ENCODE measurements at regions of chr17 and their contacts with region 1.

Region 1: GRCh38 chr17:31216053-31216751 is 80.8 kb downstream of the OMG start:
- DNase-seq: peak; percentile 55

Region 2: GRCh38 chr17:31008374-31009041 is 207.7 kb before region 1 on chr17:
- in situ Hi-C with region 1: loop called (anchors 25 kb)
- DNase-seq: peak; percentile 83

Region 3: GRCh38 chr17:31321481-31321880 is 105.3 kb after region 1 on chr17 and contains the start of gene EVI2A:
- in situ Hi-C with region 1: loop called (anchors 25 kb)
- DNase-seq: peak; percentile 96

Region 4: GRCh38 chr17:31524926-31525800 is 309.0 kb after region 1 on chr17:
- in situ Hi-C with region 1: loop called (anchors 25 kb)
- DNase-seq: peak; percentile 84